HepG2 (cell line): ENCODE measurements at regions of chr9 and their contacts with region 1.

Region 1: DNA sequence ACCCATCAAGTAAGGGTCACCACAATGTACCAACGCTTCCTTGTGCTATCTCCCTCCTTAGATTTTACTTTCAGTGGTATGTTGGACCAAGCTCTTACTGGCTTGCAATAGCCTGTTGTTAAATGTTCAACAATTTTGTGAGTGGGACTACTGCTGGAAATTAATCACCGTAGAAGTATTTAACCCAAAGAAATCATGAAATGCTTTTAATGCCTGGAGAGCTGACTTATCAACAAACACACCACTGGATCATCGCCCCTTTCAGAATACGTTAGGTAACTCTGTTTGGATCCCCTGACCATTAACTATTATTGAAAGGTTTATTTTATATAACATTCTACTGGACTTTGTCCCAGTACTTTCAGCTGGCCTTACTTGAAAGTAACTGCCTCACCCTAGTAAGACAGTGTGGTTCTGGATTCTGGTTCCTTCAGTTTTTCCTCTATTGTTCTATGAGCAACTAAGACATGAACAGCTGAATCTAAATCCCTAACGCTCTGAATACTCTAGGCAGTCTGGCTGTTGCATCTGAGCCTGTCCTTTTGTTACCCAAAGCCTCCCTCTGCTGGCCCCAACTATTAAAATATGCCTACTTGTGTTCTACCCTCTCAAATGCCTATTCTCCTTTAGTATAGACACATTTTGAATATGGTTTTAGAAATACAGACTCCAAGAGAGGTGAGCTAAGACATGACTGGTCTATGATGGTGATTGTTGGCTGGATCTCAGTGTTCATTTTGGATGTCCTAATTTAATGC is 1203.4 kb upstream of the DMAC1 start:
- DNase-seq: peak; percentile 16
- ATAC-seq: peak; percentile 65; the same call in 2 of the 3 replicates
- H3K4me3 ChIP-seq: no peak overlapping the region
- H3K27ac ChIP-seq: no peak overlapping the region
- H3K4me1 ChIP-seq: no peaks in the 10 kb centered on the region
- H3K27me3 ChIP-seq: no peaks in the 10 kb centered on the region
- CTCF ChIP-seq: peak; percentile 43
- EP300 ChIP-seq: no peak
- POLR2A ChIP-seq: no peak
- RAD21 ChIP-seq: no peak

Region 2: GRCh38 chr9:8679371-8679822 is 323.6 kb before region 1 on chr9:
- CTCF ChIA-PET with region 1: no interaction called
- POLR2A ChIA-PET with region 1: no interaction called
- in situ Hi-C with region 1: no loop called
- intact Hi-C with region 1: loop called (anchors 10 kb)
- DNase-seq: no peak
- ATAC-seq: no peak
- H3K4me3 ChIP-seq: no peak overlapping the region
- H3K27ac ChIP-seq: no peak overlapping the region
- H3K4me1 ChIP-seq: no peaks in the 10 kb centered on the region
- H3K27me3 ChIP-seq: no peaks in the 10 kb centered on the region
- CTCF ChIP-seq: no peak
- EP300 ChIP-seq: no peak
- POLR2A ChIP-seq: no peak
- RAD21 ChIP-seq: no peak

Region 3: GRCh38 chr9:8895861-8896224 is 107.2 kb before region 1 on chr9:
- CTCF ChIA-PET with region 1: no interaction called
- POLR2A ChIA-PET with region 1: no interaction called
- in situ Hi-C with region 1: no loop called
- intact Hi-C with region 1: loop called (anchors 10 kb)
- DNase-seq: peak; percentile 30
- ATAC-seq: peak; percentile 71
- H3K4me3 ChIP-seq: no peak overlapping the region
- H3K27ac ChIP-seq: no peak overlapping the region
- H3K4me1 ChIP-seq: no peaks in the 10 kb centered on the region
- H3K27me3 ChIP-seq: no peaks in the 10 kb centered on the region
- CTCF ChIP-seq: peak; percentile 47
- EP300 ChIP-seq: no peak
- POLR2A ChIP-seq: no peak
- RAD21 ChIP-seq: no peak

Region 4: DNA sequence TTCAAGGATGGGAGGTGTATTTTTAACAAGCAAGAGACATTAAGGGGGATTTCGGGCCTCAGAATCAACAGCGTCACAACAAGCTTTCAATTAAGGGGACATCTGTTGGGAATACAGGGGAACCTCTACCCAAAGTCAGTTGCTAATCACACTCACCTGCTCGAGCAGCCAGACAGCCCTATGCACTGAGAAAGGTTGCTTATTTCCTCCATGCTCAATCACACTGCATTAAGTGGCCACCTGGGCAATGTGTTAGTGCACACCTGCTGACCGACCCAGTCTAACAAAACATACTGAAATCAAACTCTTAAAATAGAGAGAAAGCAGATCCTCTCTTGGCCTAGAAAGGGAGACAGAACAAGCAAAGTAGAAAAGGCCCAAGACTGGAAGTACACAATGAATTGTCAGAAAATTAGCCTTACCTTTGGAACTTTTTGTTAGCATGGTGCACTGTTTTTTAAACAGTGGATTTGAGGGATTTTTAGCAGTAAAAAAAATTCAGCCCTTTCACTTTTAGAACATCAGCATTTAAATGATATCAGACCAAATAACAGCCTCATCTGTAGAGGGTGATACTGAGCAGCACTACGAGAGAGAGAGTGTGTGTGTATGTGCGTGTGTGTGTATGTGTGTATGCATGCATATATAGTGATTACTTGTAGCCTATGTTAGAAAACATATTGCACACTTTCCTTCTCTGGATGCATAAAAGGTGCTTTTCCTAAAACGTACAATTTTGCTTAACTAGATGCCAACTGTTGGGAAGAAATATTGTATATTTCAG is 84.9 kb before region 1 on chr9:
- CTCF ChIA-PET with region 1: no interaction called
- POLR2A ChIA-PET with region 1: no interaction called
- in situ Hi-C with region 1: no loop called
- intact Hi-C with region 1: loop called (anchors 5 kb)
- DNase-seq: no peak
- ATAC-seq: no peak
- H3K4me3 ChIP-seq: no peak overlapping the region
- H3K27ac ChIP-seq: no peak overlapping the region
- H3K4me1 ChIP-seq: no peaks in the 10 kb centered on the region
- H3K27me3 ChIP-seq: no peaks in the 10 kb centered on the region
- CTCF ChIP-seq: no peak
- EP300 ChIP-seq: no peak
- POLR2A ChIP-seq: no peak
- RAD21 ChIP-seq: no peak

Region 5: GRCh38 chr9:8961186-8961851 is 41.7 kb before region 1 on chr9:
- CTCF ChIA-PET with region 1: no interaction called
- POLR2A ChIA-PET with region 1: no interaction called
- in situ Hi-C with region 1: no loop called
- intact Hi-C with region 1: loop called (anchors 2 kb)
- DNase-seq: peak; percentile 97
- ATAC-seq: peak; percentile 99
- H3K4me3 ChIP-seq: peak overlapping the region in 1 of 3 experiments; percentile 9; a peak in 1 of 6 replicates
- H3K27ac ChIP-seq: peak overlapping the region; percentile 80
- H3K4me1 ChIP-seq: peaks cover 46% of the 10 kb centered on the region
- H3K27me3 ChIP-seq: no peaks in the 10 kb centered on the region
- CTCF ChIP-seq: no peak
- EP300 ChIP-seq: peak; percentile 87 to 91
- POLR2A ChIP-seq: peak in 1 of 2 experiments; percentile 24; a peak in 1 of 4 replicates
- RAD21 ChIP-seq: no peak